A673 (cell line): ENCODE measurements at regions of chr1 and their contacts with region 1.

Region 1: DNA sequence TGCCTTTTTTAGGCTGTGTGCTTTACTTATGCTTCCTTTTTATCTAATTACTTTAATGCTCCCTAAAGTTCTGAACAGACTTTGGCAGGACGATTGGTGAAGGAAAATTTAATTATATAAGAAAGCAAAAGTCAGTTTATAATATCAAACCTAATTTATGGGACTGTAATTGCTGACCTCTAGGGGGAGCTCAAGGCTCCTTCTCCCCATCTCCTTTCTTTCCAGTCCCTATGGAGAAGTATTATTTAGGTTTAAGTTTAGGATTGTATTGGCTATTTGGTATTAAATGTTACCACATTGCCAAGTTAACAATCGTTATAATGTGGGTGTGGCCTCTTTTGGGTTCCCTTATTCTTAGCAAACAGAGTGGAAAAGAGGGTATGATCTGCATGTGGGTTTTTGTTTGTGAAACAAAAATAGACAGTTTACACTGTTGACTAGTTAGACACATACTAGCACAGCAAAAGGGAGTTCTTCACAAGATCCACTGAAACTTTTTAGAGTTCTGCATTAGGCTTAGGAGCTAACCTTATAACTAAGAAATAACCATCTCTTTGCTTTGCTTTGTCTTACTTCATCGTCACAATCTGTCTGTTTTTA is 48.2 kb upstream of the TNFSF4 start:
- DNase-seq: peak; percentile 48
- H3K4me3 ChIP-seq: no peak overlapping the region
- H3K27ac ChIP-seq: no peak overlapping the region
- H3K4me1 ChIP-seq: no peaks in the 10 kb centered on the region
- H3K27me3 ChIP-seq: no peaks in the 10 kb centered on the region
- CTCF ChIP-seq: peak; percentile 91

Region 2: GRCh38 chr1:173409613-173410012 is 154.3 kb after region 1 on chr1:
- CTCF ChIA-PET with region 1: no interaction called
- POLR2A ChIA-PET with region 1: no interaction called
- intact Hi-C with region 1: loop called (anchors 10 kb)
- DNase-seq: no peak
- H3K4me3 ChIP-seq: no peak overlapping the region
- H3K27ac ChIP-seq: no peak overlapping the region
- H3K4me1 ChIP-seq: no peaks in the 10 kb centered on the region
- H3K27me3 ChIP-seq: no peaks in the 10 kb centered on the region
- CTCF ChIP-seq: no peak